Dendritic cell treated with granulocyte-macrophage colony-stimulating factor and Interleukin-4, amounts not matched to agents 40 ng/mL and 50 ng/mL, for 4 days (primary cell): ENCODE measurements at regions of chr19 and their contacts with region 1.

Region 1: GRCh38 chr19:41310033-41310758 is at the start of gene CCDC97:
- H3K4me3 Mint-ChIP-seq: peak within 1 kb of the TSS; percentile 92
- H3K27ac Mint-ChIP-seq: peak within 1 kb of the TSS; percentile 98
- H3K4me1 Mint-ChIP-seq: peaks cover 75% of the 10 kb centered on the region
- H3K27me3 Mint-ChIP-seq: no peaks in the 10 kb centered on the region

Region 2: GRCh38 chr19:41156207-41156606 is 154.0 kb before region 1 on chr19:
- intact Hi-C with region 1: loop called (anchors 5 kb)
- H3K4me3 Mint-ChIP-seq: no peak overlapping the region
- H3K27ac Mint-ChIP-seq: no peak overlapping the region
- H3K4me1 Mint-ChIP-seq: no peaks in the 10 kb centered on the region
- H3K27me3 Mint-ChIP-seq: no peaks in the 10 kb centered on the region

Region 3: GRCh38 chr19:41206926-41207750 is 103.1 kb before region 1 on chr19:
- intact Hi-C with region 1: loop called (anchors 1 kb)
- H3K4me3 Mint-ChIP-seq: no peak overlapping the region
- H3K27ac Mint-ChIP-seq: no peak overlapping the region
- H3K4me1 Mint-ChIP-seq: peaks cover 34% of the 10 kb centered on the region
- H3K27me3 Mint-ChIP-seq: no peaks in the 10 kb centered on the region

Region 4: GRCh38 chr19:41263850-41264580 is 46.2 kb before region 1 on chr19 and contains the start of gene HNRNPUL1:
- intact Hi-C with region 1: loop called (anchors 2 kb)
- H3K4me3 Mint-ChIP-seq: peak within 1 kb of the TSS; percentile 96
- H3K27ac Mint-ChIP-seq: peak within 1 kb of the TSS; percentile 99
- H3K4me1 Mint-ChIP-seq: peaks cover 48% of the 10 kb centered on the region
- H3K27me3 Mint-ChIP-seq: peaks cover 3% of the 10 kb centered on the region

Region 5: GRCh38 chr19:41298348-41298964 is 11.7 kb before region 1 on chr19:
- intact Hi-C with region 1: loop called (anchors 1 kb)
- H3K4me3 Mint-ChIP-seq: peak overlapping the region; percentile 39
- H3K27ac Mint-ChIP-seq: peak overlapping the region; percentile 83
- H3K4me1 Mint-ChIP-seq: peaks cover 66% of the 10 kb centered on the region
- H3K27me3 Mint-ChIP-seq: no peaks in the 10 kb centered on the region

Region 6: DNA sequence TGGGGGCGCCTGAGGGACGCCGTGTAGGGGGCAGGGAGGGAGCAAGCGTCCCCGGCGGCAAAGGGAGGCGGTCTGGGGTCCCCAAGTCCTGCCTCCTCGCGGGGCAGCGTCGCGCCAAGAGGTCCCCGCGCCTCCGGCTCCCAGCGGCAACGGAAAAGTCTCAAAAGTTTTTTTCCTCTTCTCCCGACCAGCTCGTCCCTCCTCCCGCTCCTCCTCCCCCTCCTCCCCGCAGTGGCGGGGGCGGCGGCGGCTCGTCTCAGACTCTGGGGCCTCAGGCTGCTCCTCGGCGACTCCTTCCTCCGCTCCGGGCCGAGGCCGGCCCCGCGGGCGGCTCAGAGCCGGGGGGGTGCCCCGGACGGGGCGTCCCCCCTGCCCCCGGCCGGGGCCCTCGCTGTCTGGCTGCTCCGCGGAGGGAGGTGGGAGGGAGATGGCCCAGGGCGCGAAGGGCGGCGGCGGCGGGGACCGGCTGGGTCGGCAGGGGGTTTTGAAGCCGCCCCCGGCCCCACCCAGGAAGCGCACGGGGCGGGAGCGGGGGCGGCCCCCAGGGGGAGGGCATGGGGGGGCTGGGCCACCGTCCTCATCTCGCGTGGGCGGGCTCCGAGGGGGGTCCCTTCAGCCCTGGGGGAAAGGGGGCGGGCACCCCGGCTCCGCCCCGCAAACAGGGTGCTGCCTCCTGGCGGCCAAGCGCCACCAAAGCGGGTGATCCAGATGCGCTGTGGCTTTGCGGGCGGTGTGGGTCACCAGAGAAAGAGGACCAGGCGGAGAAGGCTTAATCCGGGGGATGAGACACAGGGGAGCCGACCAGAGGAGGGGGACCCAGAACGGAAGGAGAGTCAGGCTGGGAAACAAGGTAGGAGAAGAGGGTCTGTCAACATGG is 43.5 kb after region 1 on chr19 and contains the start of gene TGFB1:
- intact Hi-C with region 1: loop called (anchors 5 kb)
- H3K4me3 Mint-ChIP-seq: peak within 1 kb of the TSS; percentile 100
- H3K27ac Mint-ChIP-seq: peak within 1 kb of the TSS; percentile 88
- H3K4me1 Mint-ChIP-seq: peaks cover 68% of the 10 kb centered on the region
- H3K27me3 Mint-ChIP-seq: no peaks in the 10 kb centered on the region